GM12878 (cell line): ENCODE measurements at regions of chr10 and their contacts with region 1.

Region 1: DNA sequence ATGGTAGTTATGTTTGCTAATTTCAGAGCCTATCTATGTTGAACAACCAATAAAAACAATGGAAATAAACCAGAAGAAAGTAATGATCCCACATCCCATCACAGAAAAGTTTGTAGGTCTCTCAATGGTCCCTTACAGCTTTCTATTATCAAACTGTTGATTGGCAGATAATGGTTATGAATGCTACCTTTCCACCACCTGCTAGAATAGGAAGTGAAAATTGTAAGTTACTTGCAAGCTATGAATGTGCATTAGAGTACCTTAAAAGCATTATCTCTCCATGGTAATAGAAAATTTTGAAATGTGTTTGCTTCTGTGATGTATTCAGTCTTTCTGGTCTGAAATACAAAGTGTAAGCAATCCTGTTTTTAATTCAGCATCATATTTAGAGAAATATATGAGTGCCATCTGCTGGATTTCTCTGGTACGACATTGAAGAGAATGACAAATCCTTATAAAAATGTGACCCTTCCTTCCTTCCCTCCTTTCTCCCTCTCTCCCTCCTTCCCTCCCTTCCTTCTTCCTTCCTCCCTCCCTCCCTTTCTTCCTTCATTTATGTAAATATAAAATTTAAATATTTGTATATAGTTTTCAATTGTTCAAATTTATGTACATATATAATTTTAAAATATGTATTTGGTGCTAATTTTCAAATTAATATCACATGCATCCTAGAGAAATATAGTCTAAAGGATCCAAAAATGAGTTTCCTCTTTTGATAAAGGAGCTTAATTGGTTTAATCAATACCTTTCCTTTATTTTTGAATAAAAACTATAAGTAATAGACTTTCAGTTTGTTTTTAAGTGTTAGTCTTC is 41.4 kb upstream of the PNLIPRP3 start:
- DNase-seq: no peak
- ATAC-seq: peak; percentile 34; the same call in 2 of the 3 replicates
- H3K4me3 ChIP-seq: no peak overlapping the region
- H3K27ac ChIP-seq: no peak overlapping the region
- H3K4me1 ChIP-seq: no peaks in the 10 kb centered on the region
- H3K27me3 ChIP-seq: no peaks in the 10 kb centered on the region
- CTCF ChIP-seq: peak; percentile 25 to 48 (median 28); a peak in 4 of 6 replicates
- EP300 ChIP-seq: no peak
- POLR2A ChIP-seq: no peak
- RAD21 ChIP-seq: 0 out of 2 replicates have a peak, but pooled peaks have one; percentile 26

Region 2: DNA sequence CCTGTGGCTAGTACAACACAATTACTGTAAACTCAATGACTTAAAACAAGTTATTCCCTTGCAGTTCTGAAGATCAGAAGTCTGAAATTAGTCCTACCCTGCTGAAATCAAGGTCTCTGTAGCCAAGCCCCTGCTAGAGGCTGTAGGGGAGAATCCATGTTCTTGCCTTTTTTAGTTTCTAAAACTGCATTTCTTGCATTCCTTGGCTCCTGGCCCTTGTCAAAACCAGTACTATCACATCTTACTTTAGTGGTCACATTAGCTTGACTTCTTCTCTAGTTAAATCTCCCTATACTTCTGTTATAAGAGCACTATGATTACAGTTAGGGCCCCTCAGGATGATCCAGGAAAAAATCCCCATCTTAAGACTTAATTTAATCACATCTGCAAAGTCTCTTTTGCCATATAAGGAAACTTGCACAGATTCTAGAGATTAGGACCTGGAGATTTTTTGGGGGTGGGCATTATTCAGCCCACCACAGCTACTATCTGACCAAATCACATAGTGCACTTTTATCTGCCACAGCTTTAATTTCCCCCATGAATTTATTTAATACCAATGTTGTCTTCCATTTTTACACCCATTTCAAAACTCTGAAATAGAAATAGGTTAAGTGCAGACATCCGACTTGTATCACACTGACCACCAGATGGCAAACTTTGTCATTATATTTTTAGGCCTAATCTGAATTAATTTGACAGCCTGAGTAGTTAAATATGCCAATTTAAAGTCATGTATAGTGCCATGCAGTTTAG is 680.0 kb before region 1 on chr10:
- CTCF ChIA-PET with region 1: interaction called, 4 read pairs
- POLR2A ChIA-PET with region 1: no interaction called
- RAD21 ChIA-PET with region 1: no interaction called
- SMC1A ChIA-PET with region 1: no interaction called
- in situ Hi-C with region 1: no loop called
- intact Hi-C with region 1: loop called (anchors 5 kb)
- DNase-seq: no peak
- ATAC-seq: peak; percentile 51; the same call in 2 of the 3 replicates
- H3K4me3 ChIP-seq: no peak overlapping the region
- H3K27ac ChIP-seq: no peak overlapping the region
- H3K4me1 ChIP-seq: no peaks in the 10 kb centered on the region
- H3K27me3 ChIP-seq: no peaks in the 10 kb centered on the region
- CTCF ChIP-seq: peak; percentile 7 to 47 (median 27); a peak in 3 of 6 replicates
- EP300 ChIP-seq: no peak
- POLR2A ChIP-seq: no peak
- RAD21 ChIP-seq: peak; percentile 38

Region 3: GRCh38 chr10:115795964-115796363 is 590.2 kb before region 1 on chr10:
- CTCF ChIA-PET with region 1: interaction called, 7 read pairs
- POLR2A ChIA-PET with region 1: no interaction called
- RAD21 ChIA-PET with region 1: no interaction called
- SMC1A ChIA-PET with region 1: no interaction called
- in situ Hi-C with region 1: no loop called
- intact Hi-C with region 1: loop called (anchors 5 kb)
- DNase-seq: no peak
- ATAC-seq: no peak
- H3K4me3 ChIP-seq: no peak overlapping the region
- H3K27ac ChIP-seq: no peak overlapping the region
- H3K4me1 ChIP-seq: no peaks in the 10 kb centered on the region
- H3K27me3 ChIP-seq: no peaks in the 10 kb centered on the region
- CTCF ChIP-seq: no peak
- EP300 ChIP-seq: no peak
- POLR2A ChIP-seq: no peak
- RAD21 ChIP-seq: no peak

Region 4: GRCh38 chr10:116444527-116445142 is 58.4 kb after region 1 on chr10:
- CTCF ChIA-PET with region 1: no interaction called
- POLR2A ChIA-PET with region 1: no interaction called
- RAD21 ChIA-PET with region 1: no interaction called
- SMC1A ChIA-PET with region 1: no interaction called
- in situ Hi-C with region 1: no loop called
- intact Hi-C with region 1: no loop called
- DNase-seq: peak; percentile 3
- ATAC-seq: peak; percentile 81
- H3K4me3 ChIP-seq: no peak overlapping the region
- H3K27ac ChIP-seq: no peak overlapping the region
- H3K4me1 ChIP-seq: no peaks in the 10 kb centered on the region
- H3K27me3 ChIP-seq: no peaks in the 10 kb centered on the region
- CTCF ChIP-seq: peak; percentile 69 to 73 (median 72); a peak in 5 of 6 replicates
- EP300 ChIP-seq: no peak
- POLR2A ChIP-seq: no peak
- RAD21 ChIP-seq: peak; percentile 48